Mammary epithelial cell (primary cell): ENCODE measurements at regions of chr1 and their contacts with region 1.

Region 1: DNA sequence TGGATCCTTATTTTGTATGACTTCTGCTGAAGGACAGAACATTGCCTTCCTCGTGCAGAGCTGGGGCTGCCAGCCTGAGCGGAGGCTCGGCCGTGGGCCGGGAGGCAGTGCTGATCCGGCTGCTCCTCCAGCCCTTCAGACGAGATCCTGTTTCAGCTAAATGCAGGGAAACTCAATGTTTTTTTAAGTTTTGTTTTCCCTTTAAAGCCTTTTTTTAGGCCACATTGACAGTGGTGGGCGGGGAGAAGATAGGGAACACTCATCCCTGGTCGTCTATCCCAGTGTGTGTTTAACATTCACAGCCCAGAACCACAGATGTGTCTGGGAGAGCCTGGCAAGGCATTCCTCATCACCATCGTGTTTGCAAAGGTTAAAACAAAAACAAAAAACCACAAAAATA is 27.5 kb upstream of the KDM4A start:
- DNase-seq: no peak
- H3K4me3 ChIP-seq: no peak overlapping the region
- H3K27ac ChIP-seq: no peak overlapping the region
- H3K4me1 ChIP-seq: no peaks in the 10 kb centered on the region
- H3K27me3 ChIP-seq: no peaks in the 10 kb centered on the region
- CTCF ChIP-seq: no peak

Region 2: GRCh38 chr1:44029906-44030604 is 407.6 kb after region 1 on chr1:
- CTCF ChIA-PET with region 1: no interaction called
- dilution Hi-C with region 1: loop called (anchors 5 kb)
- in situ Hi-C with region 1: no loop called
- intact Hi-C with region 1: no loop called
- DNase-seq: peak; percentile 88
- H3K4me3 ChIP-seq: peak overlapping the region; percentile 78 to 87 (median 83)
- H3K27ac ChIP-seq: peak overlapping the region; percentile 83
- H3K4me1 ChIP-seq: peaks cover 29% of the 10 kb centered on the region
- H3K27me3 ChIP-seq: no peaks in the 10 kb centered on the region
- CTCF ChIP-seq: no peak